ENCODE measurements at regions of chr15 and their contacts with region 1.

Region 1: GRCh38 chr15:71448688-71449114 is 333.4 kb downstream of the THSD4 start:
- DNase-seq: no peak
- ATAC-seq: peak; percentile 82

Region 2: DNA sequence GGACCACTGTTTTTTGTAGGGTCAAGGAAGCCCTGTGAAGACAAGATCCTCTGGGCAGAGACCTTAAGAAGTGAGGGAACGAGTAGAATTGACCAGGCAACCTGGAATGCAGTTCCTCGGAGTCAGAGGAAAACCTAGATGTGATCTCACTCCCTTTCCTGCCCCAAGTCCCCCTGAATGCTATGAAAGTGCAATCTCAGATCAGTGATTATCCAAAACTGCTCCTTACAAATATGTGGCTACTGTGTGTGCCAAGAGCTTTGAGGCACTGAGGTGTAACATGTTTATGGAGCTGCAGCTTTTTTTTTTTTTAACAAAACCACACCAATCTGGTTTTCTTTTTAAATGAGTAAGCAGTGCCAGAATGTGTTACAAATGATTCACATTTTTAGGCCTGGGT is 297.6 kb before region 1 on chr15:
- intact Hi-C with region 1: no loop called
- DNase-seq: no peak
- ATAC-seq: no peak

Region 3: DNA sequence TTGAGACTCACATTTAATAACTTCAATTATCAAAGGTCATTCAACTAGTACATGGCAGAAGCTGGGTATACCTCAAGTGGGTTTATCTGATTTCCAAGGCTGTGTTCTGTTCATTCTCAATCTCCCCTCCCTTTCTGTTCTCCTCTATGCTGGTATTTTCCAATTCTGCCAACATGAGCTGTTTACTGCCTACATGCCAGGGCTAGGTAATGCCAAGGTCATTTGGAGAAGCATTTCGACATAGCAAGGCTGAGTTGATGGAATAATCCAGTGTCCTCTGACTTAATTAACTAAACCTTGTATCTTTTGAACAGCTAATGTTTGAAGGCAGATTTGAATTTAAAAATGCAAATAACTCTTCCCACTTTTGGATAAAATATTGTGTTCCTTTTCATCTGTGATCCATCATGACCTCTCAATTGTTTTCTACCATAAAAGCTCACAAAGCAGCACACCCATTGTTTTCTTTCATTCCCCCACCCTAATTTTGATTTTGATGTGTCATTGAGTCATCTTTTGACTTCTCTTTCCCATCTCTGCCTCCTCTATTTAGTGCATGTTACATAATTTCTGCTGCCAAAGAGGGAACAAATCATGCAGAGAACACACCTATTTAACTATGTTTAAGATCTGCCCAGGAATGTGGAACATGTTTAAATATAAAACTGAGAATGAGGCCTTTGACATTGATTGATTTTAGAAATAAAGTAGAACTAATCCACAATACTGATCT is 52.8 kb after region 1 on chr15:
- intact Hi-C with region 1: loop called (anchors 5 kb)
- DNase-seq: no peak
- ATAC-seq: peak; percentile 88

Region 4: GRCh38 chr15:71547011-71547410 is 98.3 kb after region 1 on chr15:
- intact Hi-C with region 1: loop called (anchors 5 kb)
- DNase-seq: peak; percentile 74
- ATAC-seq: peak; percentile 66

Region 5: GRCh38 chr15:71651750-71652186 is 203.1 kb after region 1 on chr15:
- intact Hi-C with region 1: loop called (anchors 2 kb)
- DNase-seq: no peak
- ATAC-seq: no peak

Region 6: DNA sequence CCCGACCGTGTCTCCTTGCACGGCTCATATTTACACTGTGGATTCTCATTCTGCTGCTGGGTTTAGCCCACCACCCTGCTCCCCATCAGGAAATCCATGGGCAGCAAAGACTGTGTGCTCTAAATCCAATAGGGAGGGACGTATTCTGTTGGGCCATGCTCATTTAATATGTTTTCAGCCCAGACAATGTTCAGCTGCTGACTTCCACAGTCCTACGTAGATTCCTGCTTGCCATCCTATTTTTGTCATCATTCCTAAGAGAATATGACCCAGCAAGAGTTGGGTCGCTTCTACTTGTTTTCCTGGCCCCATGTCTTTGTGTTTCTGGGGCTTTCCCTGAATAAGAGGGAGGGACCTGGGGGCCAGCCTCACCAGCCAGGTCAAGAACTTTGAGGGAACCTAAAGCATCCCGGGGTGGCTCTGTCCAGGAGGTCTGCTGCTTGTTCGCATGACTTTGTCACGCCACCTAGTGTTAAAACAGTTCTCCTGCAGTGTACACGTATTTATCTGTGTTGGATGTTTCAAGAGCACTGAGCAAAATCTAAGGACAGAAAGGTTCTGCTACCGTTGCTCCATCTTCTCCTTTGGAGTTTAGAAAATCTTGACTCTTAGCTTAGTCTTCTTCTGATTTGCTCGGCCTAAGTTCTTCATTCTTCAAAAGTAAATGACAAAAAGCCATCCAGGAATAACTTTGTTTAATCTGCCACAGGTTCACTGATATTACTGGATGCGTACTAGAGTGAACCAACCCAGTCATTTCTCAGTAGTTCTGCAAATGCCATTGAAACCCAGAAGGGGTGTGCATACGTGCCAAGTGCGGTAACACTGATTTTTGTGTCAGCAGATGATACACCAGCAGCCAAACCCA is 281.8 kb after region 1 on chr15:
- intact Hi-C with region 1: loop called (anchors 2 kb)
- DNase-seq: no peak
- ATAC-seq: peak; percentile 76

Region 7: GRCh38 chr15:71800835-71801745 is 352.4 kb after region 1 on chr15:
- intact Hi-C with region 1: loop called (anchors 2 kb)
- DNase-seq: no peak
- ATAC-seq: peak; percentile 77